ENCODE measurements at regions of chr2 and their contacts with region 1.

Region 1: GRCh38 chr2:68467077-68467960 is at the starts of genes APLF and FBXO48:
- DNase-seq: peak; percentile 98 to 99 (median 99)
- H3K4me3 ChIP-seq: peak within 1 kb of the TSS; percentile 78 to 99 (median 82)
- H3K4me3 Mint-ChIP-seq: peak within 1 kb of the TSS; percentile 90 to 96
- H3K27ac ChIP-seq: peak within 1 kb of the TSS; percentile 73 to 89
- H3K27ac Mint-ChIP-seq: peak within 1 kb of the TSS; percentile 92 to 96 (median 94)
- H3K4me1 ChIP-seq: peaks cover 20 to 29% of the 10 kb centered on the region in 2 donors
- H3K4me1 Mint-ChIP-seq: peaks cover 29% of the 10 kb centered on the region
- H3K27me3 ChIP-seq: no peaks in the 10 kb centered on the region
- H3K27me3 Mint-ChIP-seq: peaks cover 0 to 2% (median 1%) of the 10 kb centered on the region in 3 donors
- CTCF ChIP-seq: no peak
- polyA plus RNA-seq, gene APLF: 0.77 to 1.8 (median 1.2) TPM
- polyA plus RNA-seq, gene FBXO48: 0.08 to 0.85 (median 0.31) TPM

Region 2: GRCh38 chr2:68594674-68595492 is 127.6 kb after region 1 on chr2:
- intact Hi-C with region 1: loop called in 1 of 2 experiments (anchors 10 kb)
- DNase-seq: peak; percentile 23 to 43 (median 30)
- H3K4me3 ChIP-seq: peak overlapping the region in 1 of 3 experiments; percentile 19
- H3K4me3 Mint-ChIP-seq: peak overlapping the region; percentile 2 to 46
- H3K27ac ChIP-seq: peak overlapping the region in 1 of 2 donors; percentile 14
- H3K27ac Mint-ChIP-seq: peak overlapping the region in 1 of 7 donors; percentile 40
- H3K4me1 ChIP-seq: peaks cover 11 to 15% of the 10 kb centered on the region in 2 donors
- H3K4me1 Mint-ChIP-seq: peaks cover 19% of the 10 kb centered on the region
- H3K27me3 ChIP-seq: no peaks in the 10 kb centered on the region
- H3K27me3 Mint-ChIP-seq: peaks cover 0 to 3% (median 3%) of the 10 kb centered on the region in 3 donors
- CTCF ChIP-seq: peak; percentile 96

Region 3: GRCh38 chr2:68734688-68735525 is 267.6 kb after region 1 on chr2 and contains the start of gene ARHGAP25:
- intact Hi-C with region 1: loop called (anchors 10 kb)
- DNase-seq: peak; percentile 73 to 84 (median 75)
- H3K4me3 ChIP-seq: peak within 1 kb of the TSS; percentile 66 to 100 (median 83)
- H3K4me3 Mint-ChIP-seq: no peak within 1 kb of the TSS
- H3K27ac ChIP-seq: peak within 1 kb of the TSS; percentile 87 to 96
- H3K27ac Mint-ChIP-seq: no peak within 1 kb of the TSS
- H3K4me1 ChIP-seq: peaks cover 80 to 90% of the 10 kb centered on the region in 2 donors
- H3K4me1 Mint-ChIP-seq: peaks cover 38% of the 10 kb centered on the region
- H3K27me3 ChIP-seq: no peaks in the 10 kb centered on the region
- H3K27me3 Mint-ChIP-seq: no peaks in the 10 kb centered on the region
- CTCF ChIP-seq: no peak
- polyA plus RNA-seq, gene ARHGAP25: 20.8 to 56.8 (median 36.3) TPM

Region 4: GRCh38 chr2:68742626-68743415 is 275.5 kb after region 1 on chr2:
- intact Hi-C with region 1: loop called (anchors 10 kb)
- DNase-seq: peak in 2 of 3 donors; percentile 62 to 65
- H3K4me3 ChIP-seq: peak overlapping the region; percentile 5 to 83 (median 64)
- H3K4me3 Mint-ChIP-seq: peak overlapping the region; percentile 29 to 84
- H3K27ac ChIP-seq: peak overlapping the region; percentile 79 to 96
- H3K27ac Mint-ChIP-seq: peak overlapping the region; percentile 98 to 100 (median 98)
- H3K4me1 ChIP-seq: peaks cover 98 to 100% of the 10 kb centered on the region in 2 donors
- H3K4me1 Mint-ChIP-seq: peaks cover 97% of the 10 kb centered on the region
- H3K27me3 ChIP-seq: no peaks in the 10 kb centered on the region
- H3K27me3 Mint-ChIP-seq: peaks cover 0 to 3% (median 2%) of the 10 kb centered on the region in 3 donors
- CTCF ChIP-seq: no peak

Region 5: DNA sequence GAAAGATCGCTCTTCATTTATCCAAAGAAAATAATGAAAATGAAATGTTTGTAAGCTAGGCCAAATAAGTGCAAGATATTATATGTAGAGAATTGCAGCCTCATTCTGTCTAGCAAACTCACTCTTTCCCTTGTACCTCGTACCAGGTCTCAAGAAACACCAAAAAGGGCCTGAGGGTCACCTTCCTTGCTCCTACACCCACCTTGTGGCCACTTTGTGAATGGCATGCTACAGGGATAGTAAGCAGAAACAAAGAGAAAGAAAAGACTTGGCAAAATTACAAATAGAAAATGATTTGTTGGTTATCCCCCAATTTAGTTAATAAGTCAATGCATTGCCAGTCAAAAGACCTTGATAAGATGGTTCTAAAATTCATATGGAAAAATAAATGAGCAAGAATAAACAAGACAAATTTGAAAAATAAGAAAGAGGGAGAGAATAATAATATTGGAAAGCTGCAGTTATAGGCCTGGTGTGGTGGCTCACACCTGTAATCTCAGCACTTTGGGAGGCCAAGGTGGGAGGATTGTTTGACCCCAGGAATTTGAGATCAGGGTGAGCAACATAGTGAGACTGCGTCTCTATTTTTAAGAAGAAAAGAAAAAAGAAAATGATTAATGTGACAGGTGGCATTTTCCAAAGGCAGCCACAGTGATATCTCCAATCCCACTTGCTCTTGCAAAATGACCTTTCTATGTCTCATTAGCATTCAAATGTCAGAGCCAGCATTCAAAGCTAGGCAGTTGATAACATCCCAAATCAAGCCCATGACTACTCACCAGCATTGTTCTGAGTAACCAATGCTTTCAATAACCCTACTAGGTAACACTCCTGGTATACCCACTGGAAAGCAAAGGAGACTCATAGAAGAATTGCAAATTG is 442.7 kb after region 1 on chr2:
- intact Hi-C with region 1: loop called (anchors 5 to 10 kb)
- DNase-seq: peak; percentile 60 to 75 (median 66)
- H3K4me3 ChIP-seq: no peak overlapping the region
- H3K4me3 Mint-ChIP-seq: no peak overlapping the region
- H3K27ac ChIP-seq: no peak overlapping the region
- H3K27ac Mint-ChIP-seq: no peak overlapping the region
- H3K4me1 ChIP-seq: peaks cover 28 to 31% of the 10 kb centered on the region in 2 donors
- H3K4me1 Mint-ChIP-seq: peaks cover 21% of the 10 kb centered on the region
- H3K27me3 ChIP-seq: no peaks in the 10 kb centered on the region
- H3K27me3 Mint-ChIP-seq: peaks cover 0 to 2% (median 0%) of the 10 kb centered on the region in 3 donors
- CTCF ChIP-seq: peak; percentile 95

Measured in CD14-positive monocyte (primary cell).